ENCODE measurements at regions of chr12 and their contacts with region 1.

Region 1: GRCh38 chr12:575948-576612 is 87.2 kb downstream of the NINJ2 start:
- DNase-seq: peak; percentile 33
- H3K4me3 ChIP-seq: no peak overlapping the region
- H3K27ac ChIP-seq: no peak overlapping the region
- H3K4me1 ChIP-seq: no peaks in the 10 kb centered on the region
- H3K27me3 ChIP-seq: no peaks in the 10 kb centered on the region
- CTCF ChIP-seq: peak; percentile 93 to 99 (median 98)
- POLR2A ChIP-seq: no peak

Region 2: GRCh38 chr12:332581-333205 is 243.4 kb before region 1 on chr12:
- intact Hi-C with region 1: no loop called
- DNase-seq: no peak
- H3K4me3 ChIP-seq: no peak overlapping the region
- H3K27ac ChIP-seq: no peak overlapping the region
- H3K4me1 ChIP-seq: no peaks in the 10 kb centered on the region
- H3K27me3 ChIP-seq: no peaks in the 10 kb centered on the region
- CTCF ChIP-seq: no peak
- POLR2A ChIP-seq: no peak

Region 3: GRCh38 chr12:1594261-1595025 is 1018.4 kb after region 1 on chr12 and contains the start of gene FBXL14:
- intact Hi-C with region 1: loop called (anchors 10 kb)
- DNase-seq: peak; percentile 80
- H3K4me3 ChIP-seq: peak within 1 kb of the TSS; percentile 73 to 75
- H3K27ac ChIP-seq: peak within 1 kb of the TSS; percentile 96 to 97
- H3K4me1 ChIP-seq: peaks cover 12% of the 10 kb centered on the region
- H3K27me3 ChIP-seq: no peaks in the 10 kb centered on the region
- CTCF ChIP-seq: peak in 1 of 4 experiments; percentile 16
- POLR2A ChIP-seq: peak; percentile 38
- total RNA-seq, gene FBXL14: 21.3 to 28.7 TPM